ENCODE measurements at regions of chr12 and their contacts with region 1.

Region 1: GRCh38 chr12:62435303-62436163 is 31.1 kb upstream of the MON2 start:
- DNase-seq: peak; percentile 40 to 59
- H3K4me3 ChIP-seq: peak overlapping the region in 2 of 3 donors; percentile 36
- H3K27ac ChIP-seq: no peak overlapping the region
- H3K4me1 ChIP-seq: peaks cover 0 to 4% of the 10 kb centered on the region in 2 donors
- H3K27me3 ChIP-seq: no peaks in the 10 kb centered on the region
- CTCF ChIP-seq: peak in 4 of 6 experiments; percentile 27 to 56 (median 36)
- POLR2A ChIP-seq: no peak

Region 2: DNA sequence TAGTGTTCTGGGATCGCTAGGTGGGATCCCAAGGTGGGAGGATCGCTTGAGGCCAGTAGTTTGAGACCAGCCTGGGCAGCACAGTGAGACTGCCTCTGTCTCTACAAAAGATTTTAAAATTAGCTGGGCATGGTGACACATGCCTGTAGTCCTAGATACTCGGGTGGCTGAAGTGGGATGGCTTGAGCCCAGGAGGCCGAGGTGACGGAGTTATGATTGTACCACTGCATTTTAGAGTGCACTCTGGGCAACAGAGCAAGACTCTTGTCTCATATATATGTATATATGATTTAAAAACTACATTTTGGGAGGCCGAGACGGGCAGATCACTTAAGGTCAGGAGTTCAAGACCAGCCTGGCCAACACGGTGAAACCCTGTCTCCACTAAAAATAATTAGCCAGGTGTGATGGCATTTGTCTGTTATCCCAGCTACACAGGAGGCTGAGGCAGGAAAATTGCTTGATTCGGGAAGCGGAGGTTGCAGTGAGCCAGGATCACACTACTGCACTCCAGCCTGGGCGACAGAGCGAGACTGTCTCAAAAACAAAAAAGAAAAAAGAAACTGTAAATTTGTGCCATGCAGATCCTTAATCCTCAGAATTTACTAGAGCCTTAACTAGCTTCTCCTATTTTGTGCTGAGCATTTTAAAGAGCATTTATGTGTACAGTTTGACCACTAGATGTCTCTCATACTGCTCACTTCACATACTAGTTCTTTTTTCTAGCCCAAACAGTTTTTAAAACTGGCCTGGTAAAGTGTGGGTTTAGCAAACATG is 145.9 kb after region 1 on chr12:
- intact Hi-C with region 1: loop called (anchors 10 kb)
- DNase-seq: peak; percentile 61 to 75
- H3K4me3 ChIP-seq: no peak overlapping the region
- H3K27ac ChIP-seq: peak overlapping the region; percentile 34 to 77 (median 48)
- H3K4me1 ChIP-seq: peaks cover 6% of the 10 kb centered on the region in 2 donors
- H3K27me3 ChIP-seq: no peaks in the 10 kb centered on the region
- CTCF ChIP-seq: peak; percentile 29 to 90 (median 70)
- POLR2A ChIP-seq: no peak

Region 3: GRCh38 chr12:62808166-62808879 is 372.8 kb after region 1 on chr12:
- intact Hi-C with region 1: loop called (anchors 5 kb)
- DNase-seq: no peak
- H3K4me3 ChIP-seq: no peak overlapping the region
- H3K27ac ChIP-seq: no peak overlapping the region
- H3K4me1 ChIP-seq: peaks cover 0 to 5% of the 10 kb centered on the region in 2 donors
- H3K27me3 ChIP-seq: no peaks in the 10 kb centered on the region
- CTCF ChIP-seq: no peak
- POLR2A ChIP-seq: no peak

Measured in thyroid gland (tissue), 4 donors.